ENCODE measurements at regions of chr20 and their contacts with region 1.

Region 1: DNA sequence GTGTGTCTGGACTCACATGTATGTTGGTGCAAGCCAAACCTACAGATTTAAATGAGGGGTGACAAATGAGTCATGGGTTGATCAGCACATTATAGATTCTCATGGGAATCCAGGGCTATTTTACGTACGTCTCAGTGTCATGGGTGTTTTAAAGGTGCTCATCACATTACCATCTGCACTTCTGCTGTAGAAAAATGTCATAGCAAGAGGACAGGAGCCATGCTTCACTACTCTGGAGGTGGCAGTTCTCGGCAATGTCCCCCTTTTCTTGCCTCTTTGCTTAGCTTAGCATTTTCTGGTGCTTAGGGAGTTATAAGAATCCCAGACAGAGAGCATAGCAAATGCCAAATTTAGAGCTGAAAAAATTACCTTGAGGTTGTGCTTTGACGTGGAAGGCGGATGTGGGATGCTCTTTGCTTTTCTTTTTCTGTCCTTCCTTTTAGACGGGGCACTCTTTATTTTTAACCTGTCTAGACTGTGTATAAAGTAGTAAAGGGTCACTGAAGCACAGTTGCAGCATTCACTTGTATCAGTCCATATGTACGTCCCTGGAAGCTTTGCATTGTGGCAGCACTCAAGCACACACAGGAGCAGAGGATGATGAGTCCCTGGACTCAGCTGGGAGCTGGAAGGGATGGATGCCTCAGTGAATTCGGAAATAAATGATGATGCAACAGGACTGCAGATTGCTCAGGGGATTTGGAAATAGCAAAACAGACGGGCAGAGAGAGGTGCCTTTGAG is 139.7 kb downstream of the SYNDIG1 start:
- DNase-seq: no peak
- H3K4me3 ChIP-seq: no peak overlapping the region
- H3K27ac ChIP-seq: no peak overlapping the region
- H3K4me1 ChIP-seq: no peaks in the 10 kb centered on the region
- H3K27me3 ChIP-seq: no peaks in the 10 kb centered on the region
- CTCF ChIP-seq: no peak
- EP300 ChIP-seq: no peak
- POLR2A ChIP-seq: no peak

Region 2: DNA sequence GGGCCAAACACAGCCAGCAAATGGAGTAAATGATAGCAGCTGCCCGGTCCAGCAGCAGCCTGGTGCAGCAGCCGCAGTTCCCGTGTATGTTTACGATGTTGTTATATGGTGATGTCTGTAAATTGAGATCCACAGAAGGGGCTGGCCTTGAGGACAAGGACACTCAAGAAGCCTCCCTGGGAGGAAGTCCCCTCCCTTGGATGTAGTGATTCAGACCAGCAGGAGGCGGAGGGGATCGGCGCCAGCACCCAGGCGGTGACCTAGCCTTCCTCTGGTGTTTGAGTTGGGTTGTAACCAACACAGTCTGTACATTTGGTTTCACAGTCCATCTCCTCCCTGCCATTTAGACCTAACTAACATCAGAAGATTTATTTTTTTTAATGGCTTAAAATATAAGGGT is 48.1 kb after region 1 on chr20:
- in situ Hi-C with region 1: no loop called
- intact Hi-C with region 1: no loop called
- DNase-seq: no peak
- H3K4me3 ChIP-seq: no peak overlapping the region
- H3K27ac ChIP-seq: no peak overlapping the region
- H3K4me1 ChIP-seq: no peaks in the 10 kb centered on the region
- H3K27me3 ChIP-seq: no peaks in the 10 kb centered on the region
- CTCF ChIP-seq: no peak
- EP300 ChIP-seq: no peak
- POLR2A ChIP-seq: no peak

Region 3: DNA sequence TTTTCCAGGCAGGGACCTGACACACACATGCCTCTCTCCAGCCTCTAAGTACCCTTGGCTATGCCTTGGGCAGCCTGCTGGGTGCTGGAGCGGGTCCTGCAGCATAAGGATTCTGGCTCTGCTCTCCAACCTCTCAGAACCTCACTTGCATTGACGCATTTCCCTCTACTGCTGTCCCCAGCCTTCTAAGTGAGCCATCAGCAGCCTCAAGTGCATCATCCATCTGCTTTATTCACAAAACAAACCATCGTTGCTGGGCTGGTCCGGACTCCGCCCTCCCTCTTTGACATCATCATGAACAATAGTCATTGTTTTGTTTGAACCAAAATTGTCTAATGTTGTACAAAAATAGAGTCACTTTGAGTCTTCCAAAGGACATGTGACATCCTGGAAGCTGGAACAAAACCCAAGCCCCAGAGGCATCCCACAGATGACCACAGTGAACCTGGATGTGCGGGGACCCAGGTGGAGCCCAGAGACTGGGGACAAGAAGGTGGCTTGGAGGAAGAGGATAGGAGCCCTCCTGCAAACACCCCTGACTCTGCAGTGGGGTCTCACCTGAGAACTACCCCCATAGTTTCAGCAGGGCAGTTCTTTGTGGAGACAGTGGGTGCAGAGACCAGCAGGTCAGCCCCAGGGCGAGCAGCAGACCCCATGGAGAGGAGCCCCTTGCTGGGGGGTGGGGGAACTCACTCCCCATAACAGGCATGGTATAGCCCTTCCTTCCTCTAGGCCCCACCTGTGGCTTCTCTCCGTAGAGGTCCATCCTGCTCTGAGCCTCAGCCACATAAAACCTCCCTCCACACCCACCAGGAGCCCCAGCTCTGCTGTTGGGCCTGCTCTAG is 90.4 kb after region 1 on chr20:
- in situ Hi-C with region 1: loop called in 1 of 4 experiments (anchors 25 kb)
- intact Hi-C with region 1: no loop called
- DNase-seq: no peak
- H3K4me3 ChIP-seq: no peak overlapping the region
- H3K27ac ChIP-seq: no peak overlapping the region
- H3K4me1 ChIP-seq: no peaks in the 10 kb centered on the region
- H3K27me3 ChIP-seq: no peaks in the 10 kb centered on the region
- CTCF ChIP-seq: no peak
- EP300 ChIP-seq: no peak
- POLR2A ChIP-seq: no peak